ENCODE measurements at regions of chr12 and their contacts with region 1.

Region 1: GRCh38 chr12:22083167-22083566 is 37.1 kb downstream of the CMAS start:
- DNase-seq: peak in 1 of 10 donors; percentile 32
- H3K4me3 ChIP-seq: no peak overlapping the region
- H3K27ac ChIP-seq: no peak overlapping the region
- H3K27me3 ChIP-seq: no peaks in the 10 kb centered on the region
- CTCF ChIP-seq: peak; percentile 55 to 91 (median 74)

Region 2: GRCh38 chr12:22334410-22335290 is 251.5 kb after region 1 on chr12 and contains the start of gene ST8SIA1:
- intact Hi-C with region 1: loop called (anchors 1 to 5 kb)
- DNase-seq: peak in 8 of 10 donors; percentile 27 to 72 (median 53)
- H3K4me3 ChIP-seq: peak within 1 kb of the TSS; percentile 53 to 90 (median 76)
- H3K27ac ChIP-seq: peak within 1 kb of the TSS in 57 of 59 donors; percentile 50 to 93 (median 81)
- H3K27me3 ChIP-seq: peaks cover 0 to 5% (median 0%) of the 10 kb centered on the region in 45 donors
- CTCF ChIP-seq: no peak
- total RNA-seq, gene ST8SIA1: 23.7 to 85.9 (median 53.9) TPM

Region 3: GRCh38 chr12:22443379-22444316 is 360.5 kb after region 1 on chr12:
- intact Hi-C with region 1: loop called in 1 of 2 experiments (anchors 2 kb)
- DNase-seq: peak in 9 of 10 donors; percentile 43 to 69 (median 52)
- H3K4me3 ChIP-seq: no peak overlapping the region
- H3K27ac ChIP-seq: no peak overlapping the region
- H3K27me3 ChIP-seq: no peaks in the 10 kb centered on the region
- CTCF ChIP-seq: peak; percentile 30 to 85 (median 70)

Region 4: GRCh38 chr12:22459838-22460490 is 376.8 kb after region 1 on chr12:
- intact Hi-C with region 1: loop called in 1 of 2 experiments (anchors 5 kb)
- DNase-seq: no peak
- H3K4me3 ChIP-seq: no peak overlapping the region
- H3K27ac ChIP-seq: no peak overlapping the region
- H3K27me3 ChIP-seq: no peaks in the 10 kb centered on the region
- CTCF ChIP-seq: peak; percentile 28 to 81 (median 68)